ENCODE measurements at regions of chr2 and their contacts with region 1.

Region 1: GRCh38 chr2:205133544-205133943 is 548.8 kb upstream of the NRP2 start:
- DNase-seq: no peak
- ATAC-seq: no peak
- H3K4me3 ChIP-seq: no peak overlapping the region
- H3K4me3 Mint-ChIP-seq: no peak overlapping the region
- H3K27ac ChIP-seq: no peak overlapping the region
- H3K27ac Mint-ChIP-seq: no peak overlapping the region
- H3K4me1 ChIP-seq: peaks cover 0 to 16% of the 10 kb centered on the region in 2 donors
- H3K4me1 Mint-ChIP-seq: peaks cover 13 to 31% (median 23%) of the 10 kb centered on the region in 7 donors
- H3K27me3 ChIP-seq: no peaks in the 10 kb centered on the region
- H3K27me3 Mint-ChIP-seq: no peaks in the 10 kb centered on the region

Region 2: GRCh38 chr2:204655131-204655530 is 478.4 kb before region 1 on chr2:
- CTCF ChIA-PET with region 1: no interaction called
- POLR2A ChIA-PET with region 1: no interaction called
- intact Hi-C with region 1: no loop called
- DNase-seq: no peak
- ATAC-seq: no peak
- H3K4me3 ChIP-seq: no peak overlapping the region
- H3K4me3 Mint-ChIP-seq: no peak overlapping the region
- H3K27ac ChIP-seq: no peak overlapping the region
- H3K27ac Mint-ChIP-seq: no peak overlapping the region
- H3K4me1 ChIP-seq: no peaks in the 10 kb centered on the region
- H3K4me1 Mint-ChIP-seq: no peaks in the 10 kb centered on the region
- H3K27me3 ChIP-seq: no peaks in the 10 kb centered on the region
- H3K27me3 Mint-ChIP-seq: no peaks in the 10 kb centered on the region

Region 3: DNA sequence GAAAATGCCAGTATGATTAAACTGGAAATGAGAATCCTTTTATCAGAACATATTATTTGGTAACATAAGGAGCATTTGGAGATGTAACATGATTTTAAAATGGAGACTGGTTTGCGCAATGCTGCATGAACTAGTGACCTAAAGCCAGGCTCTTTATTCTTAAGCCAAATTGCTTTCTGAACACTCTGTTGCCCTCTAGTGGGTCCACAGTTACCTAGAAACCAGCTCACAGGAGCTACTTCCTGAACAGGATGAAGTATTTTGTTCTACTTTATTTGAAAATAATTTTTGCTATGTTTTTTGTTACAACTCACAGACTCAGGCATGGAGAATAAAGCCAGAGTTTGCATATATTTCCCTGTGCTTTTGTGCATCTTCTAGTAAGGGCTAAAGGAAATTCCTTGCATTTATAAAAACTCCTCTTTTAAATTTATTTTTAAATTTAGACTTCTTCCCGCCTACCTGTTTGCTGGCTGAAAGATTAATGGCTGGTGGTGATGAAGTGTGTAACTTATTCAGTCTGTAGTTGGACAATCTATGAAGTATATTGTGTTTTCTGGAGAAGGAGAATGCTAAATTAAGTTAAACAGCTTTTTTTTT is 441.5 kb before region 1 on chr2:
- CTCF ChIA-PET with region 1: no interaction called
- POLR2A ChIA-PET with region 1: no interaction called
- intact Hi-C with region 1: loop called in 1 of 2 experiments (anchors 1 kb)
- DNase-seq: peak in 6 of 9 donors; percentile 4 to 42 (median 26)
- ATAC-seq: peak; percentile 55
- H3K4me3 ChIP-seq: no peak overlapping the region
- H3K4me3 Mint-ChIP-seq: no peak overlapping the region
- H3K27ac ChIP-seq: no peak overlapping the region
- H3K27ac Mint-ChIP-seq: no peak overlapping the region
- H3K4me1 ChIP-seq: peaks cover 0 to 6% of the 10 kb centered on the region in 2 donors
- H3K4me1 Mint-ChIP-seq: peaks cover 0 to 15% (median 9%) of the 10 kb centered on the region in 7 donors
- H3K27me3 ChIP-seq: no peaks in the 10 kb centered on the region
- H3K27me3 Mint-ChIP-seq: peaks cover 0 to 13% (median 0%) of the 10 kb centered on the region in 5 donors

Region 4: DNA sequence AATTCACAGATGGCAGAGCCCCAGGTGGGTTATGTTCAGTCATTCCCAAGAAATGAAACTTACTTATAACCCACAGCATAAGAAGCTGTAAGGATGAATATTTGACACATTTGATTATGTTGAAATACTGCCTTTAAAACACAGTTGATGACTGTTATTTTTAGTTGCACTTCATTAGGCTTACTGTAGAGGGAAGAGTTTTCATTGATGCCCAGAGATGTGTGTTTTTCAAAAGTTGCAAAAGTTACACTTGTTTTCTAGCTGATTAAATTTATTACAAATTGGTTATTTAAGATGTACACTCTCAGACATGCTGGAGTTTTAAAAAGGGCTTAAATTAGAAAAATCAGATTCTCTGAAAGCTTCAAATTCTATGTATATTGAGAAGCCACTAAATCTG is 82.1 kb before region 1 on chr2:
- CTCF ChIA-PET with region 1: interaction called, 6 read pairs
- POLR2A ChIA-PET with region 1: no interaction called
- intact Hi-C with region 1: loop called in 1 of 2 experiments (anchors 1 kb)
- DNase-seq: peak in 4 of 9 donors; percentile 18 to 21 (median 19)
- ATAC-seq: no peak
- H3K4me3 ChIP-seq: no peak overlapping the region
- H3K4me3 Mint-ChIP-seq: no peak overlapping the region
- H3K27ac ChIP-seq: no peak overlapping the region
- H3K27ac Mint-ChIP-seq: no peak overlapping the region
- H3K4me1 ChIP-seq: no peaks in the 10 kb centered on the region
- H3K4me1 Mint-ChIP-seq: peaks cover 2 to 41% (median 32%) of the 10 kb centered on the region in 7 donors
- H3K27me3 ChIP-seq: no peaks in the 10 kb centered on the region
- H3K27me3 Mint-ChIP-seq: no peaks in the 10 kb centered on the region